Keratinocyte (primary cell): ENCODE measurements at regions of chr9 and their contacts with region 1.

Region 1: DNA sequence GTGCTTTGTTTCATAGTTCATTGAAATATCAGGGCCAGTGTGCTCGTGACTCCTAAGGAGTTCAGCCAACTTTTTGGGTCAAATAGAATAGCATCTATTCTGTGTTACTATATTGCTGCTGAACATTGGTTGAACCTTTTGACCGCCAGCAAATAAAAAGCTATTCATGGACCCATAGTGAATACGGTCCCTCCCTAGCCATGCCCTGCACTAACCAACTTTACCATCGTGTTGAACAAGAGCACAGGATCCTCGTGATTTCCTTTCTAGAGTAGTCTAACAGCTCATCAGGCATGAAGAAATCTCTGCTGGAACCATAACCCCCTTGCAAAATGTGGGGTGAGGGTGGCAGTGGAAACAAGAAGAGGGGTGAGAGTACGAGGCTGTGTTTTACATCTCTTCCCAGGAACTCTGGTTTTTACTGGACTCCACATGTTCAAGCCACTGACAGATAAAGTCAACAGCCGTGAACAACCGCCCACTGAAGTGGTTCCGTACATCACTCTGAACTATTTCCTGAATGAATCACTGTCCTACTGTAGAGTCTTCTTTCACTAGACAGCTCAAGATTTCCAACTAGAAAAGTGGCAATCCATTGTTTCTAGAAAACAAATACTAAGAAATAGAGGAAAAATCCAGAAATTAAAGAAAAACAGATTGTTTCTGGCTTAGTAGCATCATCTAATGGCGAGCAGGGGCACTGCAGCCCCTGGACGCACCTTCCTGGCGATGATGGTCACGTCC is 70.1 kb upstream of the SPATA31E1 start:
- DNase-seq: no peak
- H3K4me3 ChIP-seq: no peak overlapping the region
- H3K27ac ChIP-seq: no peak overlapping the region
- H3K4me1 ChIP-seq: peaks cover 4% of the 10 kb centered on the region
- H3K27me3 ChIP-seq: no peaks in the 10 kb centered on the region
- CTCF ChIP-seq: peak; percentile 87 to 99 (median 98)

Region 2: DNA sequence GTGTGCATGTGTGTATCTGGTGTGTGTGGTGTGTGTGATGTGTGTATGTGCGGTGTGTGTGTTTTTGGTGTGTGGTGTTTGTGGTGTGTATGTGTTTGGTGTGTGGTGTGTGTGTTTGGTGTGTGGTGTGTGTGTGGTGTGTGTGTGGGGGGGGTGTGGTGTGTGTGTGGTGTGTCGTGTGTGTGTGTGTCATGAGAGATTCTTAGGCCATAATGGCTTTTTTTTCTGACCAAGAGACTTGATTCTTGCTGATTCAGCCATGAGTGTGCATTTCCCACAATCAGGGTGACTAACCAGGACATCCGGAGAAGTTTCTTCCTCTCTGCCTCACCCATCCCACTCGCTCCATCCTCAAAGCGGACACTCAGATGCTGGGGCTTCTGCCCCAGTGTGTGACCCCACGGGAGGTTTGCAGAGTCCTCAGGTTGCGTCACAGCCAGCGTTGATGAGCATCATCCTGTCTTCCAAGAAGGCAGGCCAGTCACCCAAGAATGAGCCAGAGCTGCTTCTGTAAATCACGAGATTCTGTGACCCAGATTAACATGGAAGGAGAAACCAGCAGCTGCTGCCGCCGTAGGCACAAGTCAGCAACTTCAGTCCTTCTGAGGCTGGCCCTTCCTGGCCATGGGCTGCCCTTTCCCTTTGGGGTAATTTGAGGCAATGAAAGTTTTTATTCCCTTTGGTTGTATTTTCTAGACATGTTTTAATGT is 99.1 kb before region 1 on chr9:
- dilution Hi-C with region 1: loop called (anchors 25 kb)
- DNase-seq: peak; percentile 77
- H3K4me3 ChIP-seq: peak overlapping the region; percentile 1 to 54 (median 36)
- H3K27ac ChIP-seq: peak overlapping the region; percentile 58
- H3K4me1 ChIP-seq: peaks cover 31% of the 10 kb centered on the region
- H3K27me3 ChIP-seq: no peaks in the 10 kb centered on the region
- CTCF ChIP-seq: no peak

Region 3: GRCh38 chr9:87872079-87872624 is 59.6 kb after region 1 on chr9:
- dilution Hi-C with region 1: no loop called
- DNase-seq: no peak
- H3K4me3 ChIP-seq: no peak overlapping the region
- H3K27ac ChIP-seq: no peak overlapping the region
- H3K4me1 ChIP-seq: no peaks in the 10 kb centered on the region
- H3K27me3 ChIP-seq: peaks cover 3% of the 10 kb centered on the region
- CTCF ChIP-seq: no peak